Aorta (tissue), 5 donors: ENCODE measurements at regions of chr4 and their contacts with region 1.

Region 1: DNA sequence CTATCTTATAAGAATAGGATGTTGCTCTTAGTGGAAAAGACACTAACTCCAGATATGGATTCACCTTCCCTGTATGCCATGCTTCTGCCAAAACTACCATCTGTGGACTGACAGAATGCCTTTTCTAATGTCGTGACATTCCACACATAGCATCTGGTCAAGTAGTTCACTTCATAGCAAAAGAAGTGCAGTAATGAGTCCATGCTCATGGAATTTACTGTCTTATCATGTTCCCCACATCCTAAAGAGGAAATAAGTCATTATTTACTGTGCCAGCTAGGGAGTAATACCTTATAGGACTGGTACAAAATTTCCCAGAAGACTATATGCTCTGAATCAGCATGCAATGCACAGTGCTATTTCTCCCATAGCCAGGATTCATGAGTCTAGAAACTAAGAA is 562.4 kb downstream of the TLL1 start:
- DNase-seq: no peak
- ATAC-seq: no peak
- H3K4me3 ChIP-seq: no peak overlapping the region
- H3K27ac ChIP-seq: no peak overlapping the region
- H3K4me1 ChIP-seq: no peaks in the 10 kb centered on the region
- H3K27me3 ChIP-seq: no peaks in the 10 kb centered on the region

Region 2: GRCh38 chr4:165684177-165684805 is 751.2 kb before region 1 on chr4:
- intact Hi-C with region 1: loop called in 1 of 2 experiments (anchors 10 kb)
- DNase-seq: no peak
- ATAC-seq: no peak
- H3K4me3 ChIP-seq: no peak overlapping the region
- H3K27ac ChIP-seq: no peak overlapping the region
- H3K4me1 ChIP-seq: no peaks in the 10 kb centered on the region
- H3K27me3 ChIP-seq: no peaks in the 10 kb centered on the region

Region 3: DNA sequence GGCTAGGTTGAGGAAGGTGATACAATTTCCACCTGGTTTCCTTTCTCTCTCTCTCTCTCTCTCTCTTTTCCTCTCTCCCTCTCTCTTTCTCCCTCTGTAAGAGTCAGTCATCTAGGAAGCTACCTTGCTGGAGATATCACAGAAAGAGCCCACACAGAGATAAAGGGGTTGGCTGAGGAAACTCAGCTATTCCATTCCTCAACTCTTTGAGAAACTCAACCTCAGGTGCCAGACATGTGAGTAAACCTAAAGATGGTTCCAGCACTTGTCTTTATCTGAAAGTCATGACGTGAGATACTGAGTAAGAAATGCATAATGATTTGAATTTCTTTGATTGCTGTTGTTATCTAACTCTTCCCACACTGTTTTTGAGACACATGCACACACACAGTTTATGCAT is 234.9 kb after region 1 on chr4:
- intact Hi-C with region 1: no loop called
- DNase-seq: no peak
- ATAC-seq: no peak
- H3K4me3 ChIP-seq: no peak overlapping the region
- H3K27ac ChIP-seq: no peak overlapping the region
- H3K4me1 ChIP-seq: no peaks in the 10 kb centered on the region
- H3K27me3 ChIP-seq: no peaks in the 10 kb centered on the region